Activated CD4-positive, alpha-beta memory T cell treated with anti-CD3 and anti-CD28 coated beads, Interleukin-2, amount 10 ng/mL, durations not matched to agents 7 days and 5 days (primary cell): ENCODE measurements at regions of chr3 and their contacts with region 1.

Region 1: GRCh38 chr3:171459942-171460724 is at the start of gene TNIK:
- DNase-seq: peak; percentile 95
- H3K4me3 Mint-ChIP-seq: peak within 1 kb of the TSS; percentile 94
- H3K27ac Mint-ChIP-seq: peak within 1 kb of the TSS; percentile 85
- H3K4me1 Mint-ChIP-seq: peaks cover 46% of the 10 kb centered on the region
- H3K27me3 Mint-ChIP-seq: no peaks in the 10 kb centered on the region
- total RNA-seq, gene TNIK: 57.6 to 61.7 TPM

Region 2: GRCh38 chr3:170703121-170703588 is 757.0 kb before region 1 on chr3:
- CTCF ChIA-PET with region 1: no interaction called
- POLR2A ChIA-PET with region 1: no interaction called
- DNase-seq: no peak
- H3K4me3 Mint-ChIP-seq: no peak overlapping the region
- H3K27ac Mint-ChIP-seq: no peak overlapping the region
- H3K4me1 Mint-ChIP-seq: no peaks in the 10 kb centered on the region
- H3K27me3 Mint-ChIP-seq: peaks cover 2% of the 10 kb centered on the region

Region 3: DNA sequence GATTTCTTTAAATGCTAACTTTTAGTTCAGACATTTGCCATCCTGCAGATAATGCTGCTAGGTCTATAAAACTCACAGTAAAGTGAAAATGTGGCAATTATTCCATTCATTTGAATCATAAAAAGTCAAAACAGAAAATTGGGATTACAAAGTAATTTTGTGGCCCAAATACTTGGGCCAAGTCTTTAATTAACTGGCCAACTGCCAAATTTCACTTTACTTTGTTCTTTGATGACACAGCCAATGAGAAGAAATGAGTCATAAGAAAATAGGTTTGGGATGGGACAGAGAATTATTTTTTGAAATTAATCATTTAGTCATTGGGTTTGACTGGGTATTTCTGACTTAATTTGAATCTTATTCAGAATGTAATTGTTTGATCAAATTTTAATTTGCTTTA is 343.8 kb before region 1 on chr3:
- CTCF ChIA-PET with region 1: no interaction called
- POLR2A ChIA-PET with region 1: no interaction called
- DNase-seq: no peak
- H3K4me3 Mint-ChIP-seq: no peak overlapping the region
- H3K27ac Mint-ChIP-seq: no peak overlapping the region
- H3K4me1 Mint-ChIP-seq: peaks cover 3% of the 10 kb centered on the region
- H3K27me3 Mint-ChIP-seq: no peaks in the 10 kb centered on the region

Region 4: GRCh38 chr3:171162986-171163723 is 297.0 kb before region 1 on chr3:
- CTCF ChIA-PET with region 1: interaction called, 13 read pairs
- POLR2A ChIA-PET with region 1: interaction called, 4 read pairs
- DNase-seq: no peak
- H3K4me3 Mint-ChIP-seq: no peak overlapping the region
- H3K27ac Mint-ChIP-seq: peak overlapping the region; percentile 3
- H3K4me1 Mint-ChIP-seq: peaks cover 21% of the 10 kb centered on the region
- H3K27me3 Mint-ChIP-seq: no peaks in the 10 kb centered on the region

Region 5: GRCh38 chr3:171257251-171258203 is 202.6 kb before region 1 on chr3:
- CTCF ChIA-PET with region 1: interaction called, 3 read pairs
- POLR2A ChIA-PET with region 1: interaction called, 19 read pairs
- DNase-seq: no peak
- H3K4me3 Mint-ChIP-seq: no peak overlapping the region
- H3K27ac Mint-ChIP-seq: peak overlapping the region; percentile 97
- H3K4me1 Mint-ChIP-seq: peaks cover 81% of the 10 kb centered on the region
- H3K27me3 Mint-ChIP-seq: no peaks in the 10 kb centered on the region

Region 6: GRCh38 chr3:171472552-171472951 is 12.4 kb after region 1 on chr3:
- CTCF ChIA-PET with region 1: interaction called, 12 read pairs
- POLR2A ChIA-PET with region 1: interaction called, 6 read pairs
- DNase-seq: no peak
- H3K4me3 Mint-ChIP-seq: no peak overlapping the region
- H3K27ac Mint-ChIP-seq: no peak overlapping the region
- H3K4me1 Mint-ChIP-seq: no peaks in the 10 kb centered on the region
- H3K27me3 Mint-ChIP-seq: peaks cover 4% of the 10 kb centered on the region

Region 7: GRCh38 chr3:171480526-171480925 is 20.4 kb after region 1 on chr3:
- CTCF ChIA-PET with region 1: interaction called, 7 read pairs
- POLR2A ChIA-PET with region 1: interaction called, 12 read pairs
- DNase-seq: no peak
- H3K4me3 Mint-ChIP-seq: no peak overlapping the region
- H3K27ac Mint-ChIP-seq: peak overlapping the region; percentile 47
- H3K4me1 Mint-ChIP-seq: peaks cover 15% of the 10 kb centered on the region
- H3K27me3 Mint-ChIP-seq: peaks cover 3% of the 10 kb centered on the region

Region 8: GRCh38 chr3:171491361-171491760 is 31.2 kb after region 1 on chr3:
- CTCF ChIA-PET with region 1: interaction called, 16 read pairs
- POLR2A ChIA-PET with region 1: interaction called, 20 read pairs
- DNase-seq: no peak
- H3K4me3 Mint-ChIP-seq: peak overlapping the region; percentile 51
- H3K27ac Mint-ChIP-seq: peak overlapping the region; percentile 50
- H3K4me1 Mint-ChIP-seq: peaks cover 44% of the 10 kb centered on the region
- H3K27me3 Mint-ChIP-seq: no peaks in the 10 kb centered on the region

Region 9: GRCh38 chr3:171566803-171567422 is 106.8 kb after region 1 on chr3:
- CTCF ChIA-PET with region 1: interaction called, 14 read pairs
- POLR2A ChIA-PET with region 1: interaction called, 16 read pairs
- DNase-seq: no peak
- H3K4me3 Mint-ChIP-seq: no peak overlapping the region
- H3K27ac Mint-ChIP-seq: no peak overlapping the region
- H3K4me1 Mint-ChIP-seq: peaks cover 22% of the 10 kb centered on the region
- H3K27me3 Mint-ChIP-seq: peaks cover 12% of the 10 kb centered on the region

Region 10: GRCh38 chr3:171606151-171606751 is 146.1 kb after region 1 on chr3:
- CTCF ChIA-PET with region 1: no interaction called
- POLR2A ChIA-PET with region 1: no interaction called
- DNase-seq: no peak
- H3K4me3 Mint-ChIP-seq: no peak overlapping the region
- H3K27ac Mint-ChIP-seq: no peak overlapping the region
- H3K4me1 Mint-ChIP-seq: no peaks in the 10 kb centered on the region
- H3K27me3 Mint-ChIP-seq: peaks cover 3% of the 10 kb centered on the region